Thyroid gland (tissue), 4 donors: ENCODE measurements at regions of chr2 and their contacts with region 1.

Region 1: DNA sequence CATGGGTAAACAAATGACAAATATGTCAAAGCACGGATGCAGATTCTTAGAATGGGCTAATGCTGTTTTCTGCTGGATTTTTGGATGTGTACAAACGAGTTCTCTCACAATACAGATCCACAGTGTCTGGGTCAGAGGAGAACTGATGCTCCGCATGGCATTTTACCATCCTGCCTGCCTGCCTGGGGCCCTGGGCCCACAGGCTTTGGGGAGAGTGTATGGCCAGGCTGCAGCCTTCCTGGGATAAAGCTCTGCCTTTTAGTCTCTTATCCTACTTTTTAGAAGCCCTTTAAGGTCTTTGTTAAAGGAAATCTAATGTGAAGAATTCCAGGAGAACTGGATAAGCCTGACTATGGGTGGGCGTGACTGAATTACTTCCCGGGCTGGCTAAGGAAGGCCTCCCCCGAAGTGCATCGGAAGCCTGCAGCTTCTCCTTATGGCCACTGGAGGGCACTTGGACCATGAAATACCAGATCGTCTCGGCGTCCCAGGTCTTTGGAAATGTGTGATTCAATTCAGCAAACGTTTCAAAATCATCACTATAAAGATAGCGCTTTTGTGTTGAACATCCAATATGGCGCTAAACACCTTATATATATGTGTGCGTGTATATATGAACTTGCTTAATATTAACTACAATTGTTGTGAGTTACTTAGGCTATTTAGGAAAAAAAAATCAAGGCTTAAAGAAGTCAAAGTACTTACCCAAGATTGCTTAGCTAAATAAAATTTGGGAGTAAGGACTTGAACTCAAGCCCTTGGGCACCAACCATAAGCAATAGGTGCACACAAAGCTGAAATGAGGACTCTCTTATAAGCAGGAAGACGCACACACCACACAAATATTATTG is 15.2 kb upstream of the DNPEP start:
- DNase-seq: peak; percentile 61 to 66
- H3K4me3 ChIP-seq: no peak overlapping the region
- H3K27ac ChIP-seq: no peak overlapping the region
- H3K4me1 ChIP-seq: peaks cover 0 to 5% of the 10 kb centered on the region in 2 donors
- H3K27me3 ChIP-seq: no peaks in the 10 kb centered on the region
- CTCF ChIP-seq: peak; percentile 74 to 89 (median 83)
- POLR2A ChIP-seq: no peak

Region 2: GRCh38 chr2:219309278-219309677 is 93.6 kb before region 1 on chr2 and contains the start of gene PTPRN:
- intact Hi-C with region 1: no loop called
- DNase-seq: no peak
- H3K4me3 ChIP-seq: no peak within 1 kb of the TSS
- H3K27ac ChIP-seq: no peak within 1 kb of the TSS
- H3K4me1 ChIP-seq: no peaks in the 10 kb centered on the region
- H3K27me3 ChIP-seq: peaks cover 10% of the 10 kb centered on the region
- CTCF ChIP-seq: no peak
- POLR2A ChIP-seq: no peak
- total RNA-seq, gene PTPRN: 1.9 to 4.6 (median 4.4) TPM in 3 of 4 donors, not detected in the other

Region 3: DNA sequence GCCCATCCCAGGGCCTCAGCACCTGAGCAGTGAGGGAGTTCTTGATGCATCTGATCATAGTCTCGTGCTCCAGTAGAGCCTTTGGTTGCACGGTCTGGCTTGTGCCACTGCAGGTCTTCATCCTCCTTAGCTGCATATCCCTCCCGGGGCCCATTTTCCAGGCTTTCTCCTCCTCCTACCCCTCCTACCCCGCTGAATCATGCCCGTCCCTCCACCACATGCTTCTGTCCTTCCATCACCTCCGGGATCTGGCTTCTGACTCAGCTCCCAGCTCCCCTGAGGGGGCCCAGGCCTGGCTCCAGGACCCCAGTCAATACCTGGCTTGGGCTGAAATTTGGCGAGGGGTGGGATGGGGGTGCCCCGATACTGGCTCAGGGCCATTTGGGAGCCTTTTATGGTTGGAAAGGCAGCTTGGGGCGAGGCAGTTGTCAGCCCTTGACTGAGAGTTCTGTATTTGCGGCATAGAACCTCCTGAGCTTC is 50.0 kb after region 1 on chr2:
- intact Hi-C with region 1: loop called (anchors 5 kb)
- DNase-seq: no peak
- H3K4me3 ChIP-seq: no peak overlapping the region
- H3K27ac ChIP-seq: no peak overlapping the region
- H3K4me1 ChIP-seq: peaks cover 0 to 11% of the 10 kb centered on the region in 2 donors
- H3K27me3 ChIP-seq: peaks cover 5% of the 10 kb centered on the region
- CTCF ChIP-seq: no peak
- POLR2A ChIP-seq: no peak

Region 4: GRCh38 chr2:219642465-219643080 is 239.7 kb after region 1 on chr2:
- intact Hi-C with region 1: loop called (anchors 10 kb)
- DNase-seq: peak; percentile 98 to 99
- H3K4me3 ChIP-seq: no peak overlapping the region
- H3K27ac ChIP-seq: no peak overlapping the region
- H3K4me1 ChIP-seq: peaks cover 0 to 18% of the 10 kb centered on the region in 2 donors
- H3K27me3 ChIP-seq: no peaks in the 10 kb centered on the region
- CTCF ChIP-seq: peak; percentile 97 to 100 (median 100)
- POLR2A ChIP-seq: no peak